ENCODE measurements at regions of chr1 and their contacts with region 1.

Region 1: GRCh38 chr1:24201941-24202440 is 14.9 kb upstream of the IFNLR1 start:
- DNase-seq: no peak
- ATAC-seq: peak; percentile 48
- H3K4me3 Mint-ChIP-seq: no peak overlapping the region
- H3K27ac Mint-ChIP-seq: no peak overlapping the region
- H3K4me1 Mint-ChIP-seq: peaks cover 35% of the 10 kb centered on the region
- H3K27me3 Mint-ChIP-seq: no peaks in the 10 kb centered on the region
- CTCF ChIP-seq: no peak

Region 2: DNA sequence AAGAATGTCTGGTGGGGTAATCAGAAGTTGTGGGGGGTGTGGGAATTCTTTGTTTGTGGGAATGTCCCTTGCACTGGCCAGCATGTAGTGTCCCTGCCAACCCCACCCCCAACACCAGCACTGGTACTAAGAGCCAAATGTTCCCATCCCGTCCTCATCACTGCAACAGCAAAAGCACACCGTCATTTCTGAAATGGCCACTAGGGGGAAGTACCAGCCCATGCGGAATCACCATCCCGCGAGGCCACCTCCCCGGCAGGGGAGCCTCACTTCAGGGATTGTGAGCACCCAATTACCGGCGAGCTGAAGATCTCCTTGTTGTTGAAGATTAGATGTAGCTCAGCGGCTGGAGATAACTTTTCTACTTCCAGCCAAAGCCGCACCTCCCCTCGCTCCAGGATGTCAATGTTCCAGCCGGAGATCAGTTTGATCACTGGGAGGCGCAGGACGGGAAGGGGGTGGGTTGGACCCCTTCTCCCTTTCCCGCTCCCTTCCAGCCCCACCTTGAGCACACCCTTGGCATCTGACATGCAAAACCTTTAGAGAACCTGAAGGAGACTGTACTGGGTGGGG is 131.1 kb before region 1 on chr1:
- CTCF ChIA-PET with region 1: interaction called, 7 read pairs
- POLR2A ChIA-PET with region 1: no interaction called
- intact Hi-C with region 1: loop called (anchors 2 kb)
- DNase-seq: peak; percentile 51
- ATAC-seq: peak; percentile 96
- H3K4me3 Mint-ChIP-seq: no peak overlapping the region
- H3K27ac Mint-ChIP-seq: no peak overlapping the region
- H3K4me1 Mint-ChIP-seq: no peaks in the 10 kb centered on the region
- H3K27me3 Mint-ChIP-seq: peaks cover 2% of the 10 kb centered on the region
- CTCF ChIP-seq: peak; percentile 85

Region 3: DNA sequence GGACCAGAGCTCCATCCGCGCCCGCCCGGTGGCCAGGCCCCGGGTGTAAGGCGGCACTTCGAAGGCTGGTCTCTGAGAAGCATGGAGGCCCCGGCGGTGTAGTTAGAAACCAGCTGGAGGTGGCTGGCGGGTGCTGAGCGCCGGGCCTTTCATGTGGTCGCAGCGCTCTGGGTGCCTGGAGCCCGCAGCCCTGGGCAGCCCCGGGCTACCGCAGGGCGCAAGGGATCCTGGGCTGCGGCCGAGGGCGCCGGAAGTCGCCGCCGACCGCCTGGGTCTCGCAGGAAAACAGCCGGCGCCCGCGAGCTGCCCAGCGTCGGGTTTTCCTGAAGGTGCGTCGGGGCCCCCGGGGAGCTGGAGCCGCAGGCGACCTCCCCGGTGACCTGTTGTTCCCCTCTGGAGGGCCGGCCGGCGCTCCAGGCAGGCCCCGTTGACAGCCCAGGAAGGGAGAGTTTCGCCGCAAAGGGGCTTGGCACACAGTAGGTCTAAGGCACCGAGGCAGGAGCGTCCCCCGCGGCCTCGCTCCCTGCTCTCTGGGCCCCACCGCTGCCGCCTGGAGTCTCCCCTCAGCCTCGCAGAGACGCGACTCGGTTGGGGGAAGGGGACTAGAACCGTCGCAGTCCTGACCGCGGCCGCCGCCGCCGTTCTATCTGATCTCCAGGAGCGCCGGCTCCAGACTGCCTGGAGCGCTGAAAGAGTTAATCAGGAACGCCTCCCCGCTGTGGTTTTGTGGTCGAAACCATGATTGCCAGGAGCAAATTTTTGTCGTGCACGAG is 119.9 kb after region 1 on chr1:
- CTCF ChIA-PET with region 1: interaction called, 12 read pairs
- POLR2A ChIA-PET with region 1: interaction called, 4 read pairs
- intact Hi-C with region 1: loop called (anchors 5 kb)
- DNase-seq: peak; percentile 59
- ATAC-seq: peak; percentile 77
- H3K4me3 Mint-ChIP-seq: peak overlapping the region; percentile 83
- H3K27ac Mint-ChIP-seq: peak overlapping the region; percentile 72
- H3K4me1 Mint-ChIP-seq: peaks cover 49% of the 10 kb centered on the region
- H3K27me3 Mint-ChIP-seq: peaks cover 34% of the 10 kb centered on the region
- CTCF ChIP-seq: no peak

Region 4: GRCh38 chr1:24391882-24392603 is 190.1 kb after region 1 on chr1:
- CTCF ChIA-PET with region 1: interaction called, 388 read pairs
- POLR2A ChIA-PET with region 1: interaction called, 49 read pairs
- intact Hi-C with region 1: loop called (anchors 1 kb)
- DNase-seq: peak; percentile 56
- ATAC-seq: peak; percentile 77
- H3K4me3 Mint-ChIP-seq: peak overlapping the region; percentile 82
- H3K27ac Mint-ChIP-seq: peak overlapping the region; percentile 96
- H3K4me1 Mint-ChIP-seq: peaks cover 43% of the 10 kb centered on the region
- H3K27me3 Mint-ChIP-seq: no peaks in the 10 kb centered on the region
- CTCF ChIP-seq: no peak

Region 5: DNA sequence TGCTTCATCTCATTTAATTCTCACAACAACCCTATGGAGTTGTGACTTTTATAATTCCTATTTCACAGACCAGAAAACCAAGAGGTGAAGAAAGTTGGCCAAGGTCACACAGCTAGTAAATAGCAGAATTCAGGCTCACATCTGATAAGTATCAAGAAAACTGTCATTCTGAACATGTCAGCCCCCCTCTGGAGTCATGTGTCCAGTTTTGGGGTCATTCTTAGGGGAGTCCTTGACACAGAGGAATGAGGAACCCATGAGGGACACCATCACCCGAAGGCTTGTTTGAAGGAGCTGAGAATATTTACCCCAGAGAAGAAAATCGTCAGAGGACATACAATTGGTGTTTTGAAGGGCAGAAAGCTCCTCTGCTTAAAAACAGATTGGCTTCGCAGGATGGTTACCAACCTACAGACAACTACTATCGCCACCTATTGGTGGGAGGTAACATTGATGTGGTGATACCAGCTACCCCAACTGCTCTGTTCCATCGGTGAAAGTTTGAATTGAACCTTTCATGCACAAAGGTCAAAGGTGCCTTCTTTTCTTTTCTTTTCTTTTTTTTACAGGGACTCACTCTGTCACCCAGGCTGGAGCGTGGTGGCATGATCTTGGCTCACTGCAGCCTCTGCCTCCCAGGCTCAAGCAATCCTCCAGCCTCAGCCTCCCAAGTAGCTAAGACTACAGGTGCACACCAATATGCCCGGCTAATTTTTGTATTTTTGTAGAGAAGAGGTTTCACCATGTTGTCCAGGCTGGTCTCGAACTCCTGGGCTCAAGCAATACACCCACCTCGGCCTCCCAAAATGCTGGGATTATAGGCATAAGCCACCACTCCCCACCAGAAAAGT is 385.2 kb after region 1 on chr1:
- CTCF ChIA-PET with region 1: interaction called, 50 read pairs
- POLR2A ChIA-PET with region 1: interaction called, 6 read pairs
- intact Hi-C with region 1: loop called (anchors 1 kb)
- DNase-seq: no peak
- ATAC-seq: peak; percentile 96
- H3K4me3 Mint-ChIP-seq: no peak overlapping the region
- H3K27ac Mint-ChIP-seq: no peak overlapping the region
- H3K4me1 Mint-ChIP-seq: peaks cover 4% of the 10 kb centered on the region
- H3K27me3 Mint-ChIP-seq: peaks cover 5% of the 10 kb centered on the region
- CTCF ChIP-seq: no peak

Region 6: GRCh38 chr1:24830680-24831272 is 628.8 kb after region 1 on chr1:
- CTCF ChIA-PET with region 1: interaction called, 7 read pairs
- POLR2A ChIA-PET with region 1: no interaction called
- intact Hi-C with region 1: loop called (anchors 5 kb)
- DNase-seq: no peak
- ATAC-seq: peak; percentile 74
- H3K4me3 Mint-ChIP-seq: no peak overlapping the region
- H3K27ac Mint-ChIP-seq: no peak overlapping the region
- H3K4me1 Mint-ChIP-seq: peaks cover 46% of the 10 kb centered on the region
- H3K27me3 Mint-ChIP-seq: no peaks in the 10 kb centered on the region
- CTCF ChIP-seq: peak; percentile 51

Measured in activated B cell treated with CpG ODN at 0.5 μM for 24 hours (primary cell).